RWPE1 (cell line): ENCODE measurements at regions of chr10 and their contacts with region 1.

Region 1: DNA sequence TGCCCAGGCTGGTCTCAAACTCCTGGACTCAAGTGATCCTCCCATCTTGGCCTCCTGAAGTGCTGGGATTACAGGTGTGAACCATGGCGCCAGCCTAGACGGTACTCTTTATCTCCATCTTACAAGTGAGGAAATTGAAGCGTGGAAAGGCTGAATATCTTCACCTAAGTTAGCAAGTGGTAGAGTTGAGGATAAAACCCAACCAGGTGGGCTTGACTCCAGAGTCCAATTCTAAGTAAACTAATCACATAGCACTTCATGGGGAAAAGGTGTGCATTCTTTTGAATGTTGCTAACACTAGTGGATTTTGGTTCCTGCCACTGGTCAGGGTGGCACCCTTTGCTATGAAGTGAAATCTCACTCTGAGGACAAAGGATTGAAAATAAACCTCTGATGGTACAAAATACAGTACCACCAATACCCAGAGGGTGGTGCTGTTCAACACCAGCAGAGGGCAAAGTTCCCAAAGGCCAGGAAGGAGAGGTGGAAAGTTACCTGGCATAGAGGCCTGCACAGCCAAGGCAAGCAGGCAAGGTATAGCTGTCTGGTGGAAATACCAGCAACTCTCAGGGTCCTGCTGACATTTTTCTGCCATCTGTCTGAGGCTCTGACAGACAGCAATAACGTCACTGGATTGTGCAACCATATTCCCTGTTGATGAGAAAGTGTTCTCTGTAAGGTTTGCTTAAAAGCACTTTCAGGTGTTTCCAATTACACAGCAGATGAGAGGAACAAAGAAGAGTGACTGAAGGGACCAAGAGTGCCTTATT is 17.6 kb downstream of the ZDHHC16 start:
- DNase-seq: peak; percentile 77
- H3K27ac ChIP-seq: peak overlapping the region; percentile 54
- CTCF ChIP-seq: peak; percentile 82

Region 2: DNA sequence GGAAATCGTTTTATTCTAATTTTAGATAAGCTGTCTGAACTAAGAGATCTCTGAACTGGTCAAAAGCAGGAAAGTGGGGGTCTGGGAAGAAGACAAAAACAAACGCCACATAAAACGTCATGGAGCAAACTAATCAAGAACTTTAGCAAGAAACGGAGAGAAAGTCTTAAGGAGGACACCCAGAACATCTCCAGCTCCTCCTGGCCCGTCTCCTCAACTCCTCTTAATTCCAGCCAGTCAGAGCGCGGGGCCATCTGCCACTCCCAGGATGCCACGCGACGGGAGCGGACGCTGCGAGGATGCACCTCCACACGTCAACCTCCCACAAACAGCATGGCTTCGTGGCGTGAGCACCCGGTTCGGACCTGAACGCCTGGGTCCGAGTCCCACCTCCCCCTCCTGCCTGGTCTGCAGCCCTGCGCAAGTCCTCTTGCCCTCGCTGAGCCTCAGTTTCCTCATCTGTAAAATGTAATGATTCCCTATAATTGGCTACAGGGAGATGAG is 34.1 kb after region 1 on chr10:
- CTCF ChIA-PET with region 1: no interaction called
- POLR2A ChIA-PET with region 1: interaction called, 10 read pairs
- DNase-seq: peak; percentile 94
- H3K27ac ChIP-seq: peak overlapping the region; percentile 96
- CTCF ChIP-seq: no peak

Region 3: DNA sequence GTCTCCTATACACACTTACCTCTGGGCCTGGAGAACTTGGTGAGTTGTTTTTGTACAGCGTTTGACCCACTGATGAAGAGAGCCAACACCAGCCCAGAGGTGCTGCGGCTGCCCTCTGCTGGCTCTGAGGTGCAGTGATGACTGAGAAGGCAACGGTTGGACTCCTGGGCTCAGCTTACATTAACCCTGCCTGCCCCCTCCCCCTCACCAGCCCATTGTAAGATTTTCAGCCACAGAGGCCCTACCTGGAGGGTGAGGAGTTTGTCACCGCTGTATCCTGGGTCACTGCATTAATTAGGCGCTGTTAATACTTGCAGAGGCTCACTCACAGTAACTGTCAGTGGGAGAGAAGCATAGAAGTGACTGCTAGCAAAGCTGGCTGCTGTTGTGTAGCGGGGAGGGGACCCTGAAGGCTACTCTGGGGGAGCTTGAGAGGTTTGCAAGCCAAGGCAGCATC is 90.1 kb after region 1 on chr10:
- CTCF ChIA-PET with region 1: interaction called, 17 read pairs
- POLR2A ChIA-PET with region 1: interaction called, 3 read pairs
- DNase-seq: peak; percentile 77
- H3K27ac ChIP-seq: peak overlapping the region; percentile 60
- CTCF ChIP-seq: peak; percentile 91

Region 4: GRCh38 chr10:97612386-97612785 is 148.8 kb after region 1 on chr10:
- CTCF ChIA-PET with region 1: interaction called, 18 read pairs
- POLR2A ChIA-PET with region 1: no interaction called
- DNase-seq: peak; percentile 87
- H3K27ac ChIP-seq: peak overlapping the region; percentile 48
- CTCF ChIP-seq: peak; percentile 57

Region 5: DNA sequence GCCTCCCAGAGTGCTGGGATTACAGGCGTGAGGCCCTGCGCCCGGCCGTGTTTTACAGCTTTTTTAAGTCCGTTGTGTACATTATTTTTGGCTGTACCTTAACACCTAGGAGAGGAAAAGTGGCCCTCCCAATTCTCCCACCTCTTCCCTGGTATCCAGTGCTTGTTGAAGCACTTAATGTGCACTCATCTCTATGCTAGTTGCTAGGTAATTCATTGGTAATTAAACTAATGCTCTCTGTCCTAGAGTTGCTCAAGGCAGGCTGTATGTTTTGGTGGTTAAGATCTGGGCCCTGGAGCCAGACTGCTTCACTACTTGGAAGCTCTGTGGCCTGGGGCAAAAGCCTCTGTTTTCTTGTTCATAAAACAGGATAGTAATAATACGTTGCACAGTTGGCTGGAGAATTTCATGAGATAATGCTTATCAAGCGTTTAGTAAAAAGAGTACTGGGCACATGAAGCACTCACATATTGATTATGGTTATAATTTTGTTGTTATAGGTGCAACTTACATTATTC is 204.0 kb after region 1 on chr10:
- CTCF ChIA-PET with region 1: no interaction called
- POLR2A ChIA-PET with region 1: no interaction called
- DNase-seq: no peak
- H3K27ac ChIP-seq: no peak overlapping the region
- CTCF ChIP-seq: no peak